Lower leg skin (tissue), 4 donors: ENCODE measurements at regions of chr7 and their contacts with region 1.

Region 1: GRCh38 chr7:83550100-83550499 is 98.8 kb downstream of the SEMA3E start:
- DNase-seq: no peak
- H3K4me3 ChIP-seq: no peak overlapping the region
- CTCF ChIP-seq: no peak
- POLR2A ChIP-seq: no peak

Region 2: DNA sequence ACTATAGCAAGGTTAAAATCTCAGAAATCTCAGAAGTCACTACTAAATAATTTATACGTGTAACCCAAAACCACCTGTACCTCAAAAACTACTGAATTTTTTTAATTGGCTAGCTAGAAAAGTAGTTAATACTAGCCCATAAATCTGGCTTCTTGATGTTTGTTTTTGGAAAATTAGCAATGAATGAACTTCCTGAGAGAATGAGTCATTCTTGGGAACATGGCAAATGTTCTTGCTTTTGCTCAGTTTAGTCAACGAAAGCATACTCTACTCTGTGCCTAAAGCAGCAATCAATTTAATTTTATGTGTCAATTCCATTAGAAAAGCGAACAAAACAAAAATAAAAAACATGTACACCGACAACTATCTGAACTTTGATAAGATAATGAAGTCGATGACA is 29.6 kb after region 1 on chr7:
- intact Hi-C with region 1: loop called (anchors 1 kb)
- DNase-seq: no peak
- H3K4me3 ChIP-seq: no peak overlapping the region
- CTCF ChIP-seq: no peak
- POLR2A ChIP-seq: no peak